Pancreas (tissue), 10 donors: ENCODE measurements at regions of chr11 and their contacts with region 1.

Region 1: DNA sequence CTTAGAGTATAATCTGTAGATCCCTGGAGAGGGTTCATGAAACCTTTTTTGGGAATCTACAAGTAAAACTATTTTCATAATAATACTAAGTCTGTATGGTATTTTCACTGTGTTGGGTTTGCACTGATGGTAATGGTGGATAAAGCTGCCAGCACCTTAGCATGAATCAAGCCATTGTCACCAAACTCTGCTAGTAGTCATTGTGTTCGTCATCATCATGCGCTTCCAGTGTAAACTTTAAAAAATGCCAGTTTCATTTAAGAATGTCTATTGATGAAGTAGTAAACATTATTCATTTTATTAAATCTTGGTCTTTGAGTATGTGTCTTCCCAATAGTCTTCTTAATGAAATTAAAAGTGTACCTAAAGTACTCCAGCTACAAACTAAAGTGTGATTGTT is 15.0 kb downstream of the ALKBH3 start:
- DNase-seq: no peak
- ATAC-seq: no peak
- H3K4me3 ChIP-seq: no peak overlapping the region
- H3K27ac ChIP-seq: no peak overlapping the region
- H3K4me1 ChIP-seq: no peaks in the 10 kb centered on the region
- H3K27me3 ChIP-seq: no peaks in the 10 kb centered on the region
- CTCF ChIP-seq: no peak

Region 2: GRCh38 chr11:43955381-43956118 is 59.9 kb after region 1 on chr11:
- intact Hi-C with region 1: no loop called
- DNase-seq: no peak
- ATAC-seq: no peak
- H3K4me3 ChIP-seq: no peak overlapping the region
- H3K27ac ChIP-seq: no peak overlapping the region
- H3K4me1 ChIP-seq: no peaks in the 10 kb centered on the region
- H3K27me3 ChIP-seq: no peaks in the 10 kb centered on the region
- CTCF ChIP-seq: no peak

Region 3: GRCh38 chr11:44047931-44048431 is 152.4 kb after region 1 on chr11 and contains the start of gene ACCSL:
- intact Hi-C with region 1: loop called in 1 of 3 experiments (anchors 10 kb)
- DNase-seq: no peak
- ATAC-seq: no peak
- H3K4me3 ChIP-seq: no peak within 1 kb of the TSS
- H3K27ac ChIP-seq: no peak within 1 kb of the TSS
- H3K4me1 ChIP-seq: no peaks in the 10 kb centered on the region
- H3K27me3 ChIP-seq: no peaks in the 10 kb centered on the region
- CTCF ChIP-seq: no peak
- total RNA-seq, gene ACCSL: not detected